Testis (tissue), 5 donors: ENCODE measurements at regions of chr9 and their contacts with region 1.

Region 1: DNA sequence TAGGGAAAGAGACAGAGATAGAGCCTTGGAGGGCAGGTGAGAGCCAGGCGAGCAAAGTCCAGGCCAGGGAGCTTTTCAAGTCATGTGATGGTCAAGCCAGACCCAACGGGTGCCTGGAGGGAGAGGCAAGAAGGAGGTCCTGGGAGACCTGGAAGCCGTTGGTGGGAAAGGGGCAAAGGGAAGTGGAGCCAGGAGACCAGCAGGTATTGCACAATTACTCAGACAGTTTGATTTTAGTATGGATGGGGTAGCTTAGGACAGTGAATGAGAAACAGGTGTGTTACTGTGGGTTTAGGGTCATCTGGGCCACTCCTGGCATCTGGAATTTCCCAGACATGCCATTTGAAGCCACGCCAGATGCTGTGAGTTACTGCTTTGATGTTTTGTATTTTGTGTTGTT is 5.1 kb downstream of the SECISBP2 start:
- DNase-seq: no peak
- H3K4me3 ChIP-seq: no peak overlapping the region
- H3K27ac ChIP-seq: no peak overlapping the region
- H3K4me1 ChIP-seq: peaks cover 8% of the 10 kb centered on the region
- H3K27me3 ChIP-seq: no peaks in the 10 kb centered on the region
- CTCF ChIP-seq: no peak
- POLR2A ChIP-seq: no peak

Region 2: DNA sequence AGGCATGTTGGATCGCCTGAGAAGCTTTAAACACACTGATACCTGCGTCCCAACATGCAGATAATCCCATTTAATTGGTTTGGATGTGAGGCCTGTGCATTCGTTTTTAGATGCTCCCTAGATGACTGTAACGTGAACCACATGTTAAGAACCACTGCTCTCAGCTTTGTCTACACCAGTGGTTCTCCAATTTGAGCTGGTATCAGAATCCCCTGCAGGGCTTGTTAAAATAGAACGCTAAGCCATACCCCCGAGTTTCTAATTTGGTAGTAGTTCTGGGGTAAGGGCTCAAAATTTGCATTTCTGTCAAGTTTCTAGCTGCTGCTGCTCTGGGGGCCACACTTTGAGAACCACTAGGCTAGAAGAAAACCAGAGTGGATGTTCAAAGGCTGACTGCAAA is 257.5 kb before region 1 on chr9:
- intact Hi-C with region 1: no loop called
- DNase-seq: no peak
- H3K4me3 ChIP-seq: no peak overlapping the region
- H3K27ac ChIP-seq: no peak overlapping the region
- H3K4me1 ChIP-seq: no peaks in the 10 kb centered on the region
- H3K27me3 ChIP-seq: no peaks in the 10 kb centered on the region
- CTCF ChIP-seq: no peak
- POLR2A ChIP-seq: no peak

Region 3: DNA sequence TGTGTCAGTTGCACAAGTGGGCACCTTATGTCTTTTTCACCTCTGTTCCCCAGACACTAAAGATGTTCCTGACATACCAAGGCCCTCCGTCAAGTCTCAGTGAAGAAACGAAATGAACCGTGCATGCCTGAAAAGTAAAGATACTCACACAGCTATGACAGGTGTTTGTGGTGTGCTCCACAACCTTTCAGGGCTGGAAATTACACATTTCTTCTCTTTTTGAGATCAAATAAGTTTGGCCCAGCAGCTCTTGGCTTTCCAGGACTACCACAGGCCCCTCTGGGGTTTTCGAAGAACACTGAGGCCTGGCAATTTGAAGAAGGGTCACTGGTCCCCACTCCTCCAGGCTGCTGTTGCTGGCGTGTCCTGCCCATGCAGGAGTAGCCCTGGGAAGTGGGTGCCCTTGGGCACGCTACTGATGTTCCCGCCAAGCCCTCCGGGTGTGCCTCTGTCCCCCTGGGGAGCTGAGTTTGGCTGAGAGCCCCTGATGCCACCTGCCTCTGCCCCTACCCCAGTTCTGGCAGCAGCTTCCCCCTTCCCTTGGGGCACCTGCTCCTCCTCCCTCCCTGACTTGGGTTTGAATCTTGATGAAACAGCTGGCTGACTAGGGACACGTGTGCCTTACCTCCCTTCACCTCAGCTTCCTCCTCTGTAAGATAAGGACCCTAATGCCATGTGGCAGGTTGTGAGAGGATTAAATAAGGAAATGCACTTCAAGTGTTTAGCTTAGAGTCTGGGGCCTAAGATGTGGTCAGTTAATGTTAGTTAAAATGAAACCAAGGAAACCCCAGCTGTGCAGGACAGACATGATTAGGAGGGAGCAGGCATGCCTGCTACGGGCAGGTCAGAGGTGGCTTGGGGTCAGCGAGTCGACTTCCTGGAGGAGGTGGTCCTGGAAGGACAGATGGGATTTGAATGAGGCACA is 232.3 kb after region 1 on chr9:
- intact Hi-C with region 1: loop called (anchors 10 kb)
- DNase-seq: no peak
- H3K4me3 ChIP-seq: no peak overlapping the region
- H3K27ac ChIP-seq: no peak overlapping the region
- H3K4me1 ChIP-seq: no peaks in the 10 kb centered on the region
- H3K27me3 ChIP-seq: no peaks in the 10 kb centered on the region
- CTCF ChIP-seq: no peak
- POLR2A ChIP-seq: no peak